ENCODE measurements at regions of chr3 and their contacts with region 1.

Region 1: GRCh38 chr3:141039589-141039988 is 11.6 kb upstream of the SPSB4 start:
- DNase-seq: no peak
- H3K4me3 ChIP-seq: no peak overlapping the region
- H3K27ac ChIP-seq: no peak overlapping the region
- H3K4me1 ChIP-seq: no peaks in the 10 kb centered on the region
- H3K27me3 ChIP-seq: peaks cover 3% of the 10 kb centered on the region
- CTCF ChIP-seq: no peak

Region 2: DNA sequence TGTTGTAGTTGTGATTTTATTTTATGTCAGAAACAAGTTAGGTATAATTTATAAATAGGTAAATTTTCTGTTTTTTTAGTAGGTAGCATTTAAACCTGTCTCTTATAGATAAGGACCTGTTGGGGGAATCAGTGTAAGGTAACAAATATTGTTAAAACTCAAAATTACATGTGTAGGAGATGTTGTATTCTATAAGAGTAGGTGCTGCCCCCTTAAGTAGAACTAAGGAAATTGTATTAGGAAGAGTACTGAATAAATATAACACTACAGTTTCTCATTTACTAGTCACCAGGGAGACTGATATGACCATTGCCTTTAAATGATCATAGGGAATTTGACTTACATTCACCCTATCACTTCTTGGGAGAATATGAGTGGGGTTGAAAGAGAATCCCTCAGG is 66.8 kb before region 1 on chr3:
- CTCF ChIA-PET with region 1: no interaction called
- dilution Hi-C with region 1: no loop called
- in situ Hi-C with region 1: no loop called
- intact Hi-C with region 1: no loop called
- DNase-seq: peak; percentile 17
- H3K4me3 ChIP-seq: no peak overlapping the region
- H3K27ac ChIP-seq: no peak overlapping the region
- H3K4me1 ChIP-seq: no peaks in the 10 kb centered on the region
- H3K27me3 ChIP-seq: no peaks in the 10 kb centered on the region
- CTCF ChIP-seq: peak; percentile 31 to 41

Region 3: GRCh38 chr3:141011232-141011996 is 28.2 kb before region 1 on chr3:
- CTCF ChIA-PET with region 1: no interaction called
- dilution Hi-C with region 1: no loop called
- in situ Hi-C with region 1: no loop called
- intact Hi-C with region 1: loop called (anchors 2 kb)
- DNase-seq: peak; percentile 31
- H3K4me3 ChIP-seq: no peak overlapping the region
- H3K27ac ChIP-seq: no peak overlapping the region
- H3K4me1 ChIP-seq: no peaks in the 10 kb centered on the region
- H3K27me3 ChIP-seq: peaks cover 2% of the 10 kb centered on the region
- CTCF ChIP-seq: peak; percentile 85 to 92

Region 4: DNA sequence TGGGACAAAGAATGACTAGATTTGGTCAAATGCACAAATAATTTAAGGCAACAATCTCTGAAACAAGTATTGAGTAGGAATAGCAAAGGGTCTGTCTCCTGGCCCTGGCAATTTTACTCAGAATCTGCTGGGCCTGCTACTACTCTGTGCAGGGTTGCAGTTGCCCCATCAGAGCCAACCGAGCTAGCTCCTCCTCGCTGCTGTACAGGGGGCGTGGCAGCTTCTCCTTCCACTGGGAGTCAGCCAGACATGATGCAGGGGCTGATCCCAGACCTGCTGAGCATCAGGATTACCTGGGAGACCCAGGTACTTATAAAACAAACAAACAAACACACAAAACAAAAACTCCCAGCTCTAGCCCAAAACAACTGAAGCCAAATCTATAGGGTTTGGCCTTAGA is 161.5 kb after region 1 on chr3:
- CTCF ChIA-PET with region 1: no interaction called
- dilution Hi-C with region 1: no loop called
- in situ Hi-C with region 1: no loop called
- intact Hi-C with region 1: no loop called
- DNase-seq: no peak
- H3K4me3 ChIP-seq: no peak overlapping the region
- H3K27ac ChIP-seq: no peak overlapping the region
- H3K4me1 ChIP-seq: no peaks in the 10 kb centered on the region
- H3K27me3 ChIP-seq: peaks cover 6% of the 10 kb centered on the region
- CTCF ChIP-seq: no peak